SK-N-SH (cell line): ENCODE measurements at regions of chr6 and their contacts with region 1.

Region 1: DNA sequence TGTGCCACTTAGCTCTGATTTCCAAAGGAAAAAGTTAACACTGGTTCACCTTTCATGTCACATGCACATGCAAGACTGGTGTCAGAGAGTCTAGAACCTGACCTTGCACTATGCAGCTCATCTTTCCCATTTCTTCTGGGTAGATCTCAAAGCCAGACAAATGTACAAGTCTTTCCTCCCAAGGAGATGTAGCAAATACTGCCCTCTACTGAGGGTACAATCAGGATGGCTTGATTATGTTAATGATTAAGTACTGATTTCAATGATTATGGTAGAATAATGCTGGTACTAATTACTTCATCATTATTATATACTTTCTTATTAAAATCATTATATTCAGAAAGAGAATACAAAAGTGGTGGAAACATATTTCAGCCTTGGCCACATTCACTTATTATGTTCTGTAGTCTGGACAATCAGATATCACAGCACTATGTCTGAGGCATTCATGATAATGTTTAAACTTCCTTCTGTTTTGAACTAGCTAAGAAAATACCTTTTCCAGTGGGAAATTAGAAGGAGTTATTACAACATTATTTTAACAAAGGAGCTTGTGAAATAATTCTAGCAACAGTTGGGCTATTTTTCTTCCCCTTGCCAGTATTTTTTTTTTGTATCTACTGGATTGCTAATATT is 68.5 kb upstream of the FOXO3 start:
- DNase-seq: peak; percentile 39
- H3K4me3 ChIP-seq: no peak overlapping the region
- H3K27ac ChIP-seq: no peak overlapping the region
- H3K4me1 ChIP-seq: no peaks in the 10 kb centered on the region
- H3K27me3 ChIP-seq: no peaks in the 10 kb centered on the region
- CTCF ChIP-seq: peak; percentile 74
- EP300 ChIP-seq: no peak
- RAD21 ChIP-seq: peak; percentile 86

Region 2: DNA sequence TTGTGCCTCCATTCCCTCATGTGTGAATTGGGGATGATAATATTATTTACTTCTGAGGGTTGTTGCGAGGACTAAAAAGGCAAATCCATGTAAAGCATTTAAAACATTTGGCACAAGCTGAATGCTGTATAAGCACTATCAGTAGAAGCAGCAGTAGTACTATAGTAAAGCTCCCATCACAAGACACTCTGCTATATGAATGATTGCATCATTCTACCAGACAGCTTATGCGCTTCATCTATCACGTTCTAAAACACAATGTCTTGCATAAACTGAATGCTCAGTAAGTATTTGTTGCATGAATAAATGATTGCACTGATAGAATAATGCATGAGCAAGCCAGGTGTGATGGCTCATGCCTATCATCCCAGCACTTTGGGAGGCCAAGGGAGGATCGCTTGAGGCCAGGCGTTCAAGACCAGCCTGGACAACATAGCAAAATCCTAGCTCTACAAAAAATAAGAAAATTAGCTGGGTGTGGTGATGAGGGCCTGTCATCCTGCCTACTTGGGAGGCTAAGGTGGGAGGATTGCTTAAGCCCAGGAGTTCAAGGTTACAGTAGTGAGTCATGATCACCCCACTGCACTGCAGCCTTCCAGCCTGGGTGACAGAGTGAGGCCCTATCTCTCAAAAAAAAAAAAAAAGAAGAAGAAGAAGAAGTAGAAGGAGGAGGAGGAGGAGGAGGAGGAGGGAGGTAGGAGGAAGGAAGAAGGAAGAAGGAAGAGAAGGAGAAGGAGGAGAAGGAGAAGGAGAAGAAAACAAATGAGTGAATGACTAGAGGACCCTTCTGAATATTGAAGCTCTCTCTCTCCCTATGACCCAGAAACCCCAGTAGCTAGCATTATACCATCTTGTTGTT is 18.4 kb after region 1 on chr6:
- CTCF ChIA-PET with region 1: interaction called, 21 read pairs
- POLR2A ChIA-PET with region 1: no interaction called
- DNase-seq: no peak
- H3K4me3 ChIP-seq: no peak overlapping the region
- H3K27ac ChIP-seq: no peak overlapping the region
- H3K4me1 ChIP-seq: no peaks in the 10 kb centered on the region
- H3K27me3 ChIP-seq: no peaks in the 10 kb centered on the region
- CTCF ChIP-seq: no peak
- EP300 ChIP-seq: no peak
- RAD21 ChIP-seq: no peak

Region 3: DNA sequence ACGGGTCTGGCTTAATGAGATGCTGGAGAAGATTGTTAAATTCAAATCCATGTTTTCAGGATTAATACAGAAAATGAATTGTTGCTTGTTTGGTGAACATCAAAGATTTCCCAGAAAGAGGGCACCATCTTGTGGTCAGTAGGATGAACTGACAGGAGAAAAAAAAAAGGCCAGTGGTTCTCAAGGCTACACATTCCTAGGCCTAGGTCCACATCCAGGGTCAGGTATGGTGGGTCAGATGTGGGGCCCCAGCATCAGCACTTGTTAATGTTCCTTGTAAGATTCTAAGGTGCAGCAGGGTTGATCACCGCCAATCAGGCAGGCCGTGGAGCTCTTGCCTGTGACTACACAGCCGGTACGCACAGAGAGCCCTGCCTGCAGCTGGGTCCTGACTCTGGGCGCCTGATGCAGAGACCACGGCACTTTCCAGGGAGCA is 34.5 kb after region 1 on chr6:
- CTCF ChIA-PET with region 1: interaction called, 20 read pairs
- POLR2A ChIA-PET with region 1: no interaction called
- DNase-seq: peak; percentile 64
- H3K4me3 ChIP-seq: no peak overlapping the region; a peak in 1 of 4 replicates
- H3K27ac ChIP-seq: no peak overlapping the region
- H3K4me1 ChIP-seq: no peaks in the 10 kb centered on the region; a peak in 1 of 4 replicates
- H3K27me3 ChIP-seq: no peaks in the 10 kb centered on the region
- CTCF ChIP-seq: peak; percentile 84
- EP300 ChIP-seq: no peak
- RAD21 ChIP-seq: peak; percentile 95